Esophagus squamous epithelium (tissue), 5 donors: ENCODE measurements at regions of chr10 and their contacts with region 1.

Region 1: GRCh38 chr10:128069351-128070051 is 56.7 kb downstream of the MKI67 start:
- DNase-seq: no peak
- H3K4me3 ChIP-seq: no peak overlapping the region
- H3K27ac ChIP-seq: no peak overlapping the region
- H3K4me1 ChIP-seq: peaks cover 0 to 33% (median 15%) of the 10 kb centered on the region in 3 donors
- H3K27me3 ChIP-seq: no peaks in the 10 kb centered on the region
- CTCF ChIP-seq: peak; percentile 83 to 95 (median 86)
- POLR2A ChIP-seq: no peak

Region 2: DNA sequence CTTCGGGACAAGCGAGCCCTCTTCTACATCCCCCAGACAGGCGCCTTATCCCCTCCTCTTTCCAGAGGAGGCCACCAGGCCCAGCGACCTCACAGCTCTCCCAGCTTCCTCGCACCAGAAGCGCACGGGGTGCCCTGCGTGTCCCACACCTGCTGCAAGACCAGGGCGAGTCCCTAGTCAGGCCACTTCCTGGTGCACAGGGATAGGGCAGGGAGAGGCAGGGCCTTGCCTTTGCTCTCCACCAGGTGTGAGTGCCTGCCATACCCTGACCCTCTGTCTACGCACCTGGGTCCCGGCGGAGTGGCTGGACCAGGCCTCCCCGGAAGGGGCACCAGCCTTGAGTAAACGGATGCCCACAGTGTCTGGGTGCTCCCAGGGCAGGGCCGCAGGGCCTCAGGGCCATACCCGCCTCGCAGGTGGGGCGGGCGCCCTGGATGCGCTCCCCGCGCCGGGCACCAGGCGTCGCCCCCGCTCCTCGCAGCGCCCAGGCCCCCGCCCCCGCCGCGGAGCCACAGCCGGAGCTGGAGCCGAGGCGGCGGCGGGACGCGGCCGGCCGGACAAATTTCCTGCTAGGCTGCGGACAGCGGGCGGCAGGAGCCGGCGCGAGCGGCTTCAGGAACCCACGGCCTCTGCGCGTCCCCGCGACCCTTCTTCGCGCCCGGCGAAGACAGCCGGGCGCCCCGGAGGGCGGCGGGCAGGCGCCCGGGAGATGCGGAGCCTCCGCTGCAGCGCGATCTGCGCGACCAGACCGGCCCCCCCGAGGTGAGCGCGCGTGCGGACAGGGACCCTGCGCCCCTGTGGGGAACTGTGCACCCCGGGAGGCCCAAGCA is 162.7 kb before region 1 on chr10 and contains the start of gene PTPRE:
- intact Hi-C with region 1: loop called (anchors 5 kb)
- DNase-seq: no peak
- H3K4me3 ChIP-seq: peak within 1 kb of the TSS; percentile 36 to 74 (median 60)
- H3K27ac ChIP-seq: peak within 1 kb of the TSS; percentile 42 to 90 (median 76)
- H3K4me1 ChIP-seq: peaks cover 7 to 33% (median 14%) of the 10 kb centered on the region in 3 donors
- H3K27me3 ChIP-seq: peaks cover 0 to 44% (median 2%) of the 10 kb centered on the region in 4 donors
- CTCF ChIP-seq: peak; percentile 44 to 93 (median 85)
- POLR2A ChIP-seq: no peak
- total RNA-seq, gene PTPRE: 9.8 to 24.9 (median 22.7) TPM

Region 3: GRCh38 chr10:127919418-127920271 is 149.9 kb before region 1 on chr10:
- intact Hi-C with region 1: no loop called
- DNase-seq: no peak
- H3K4me3 ChIP-seq: no peak overlapping the region
- H3K27ac ChIP-seq: peak overlapping the region in 3 of 4 donors; percentile 9 to 65 (median 52)
- H3K4me1 ChIP-seq: peaks cover 0 to 35% (median 11%) of the 10 kb centered on the region in 3 donors
- H3K27me3 ChIP-seq: no peaks in the 10 kb centered on the region
- CTCF ChIP-seq: no peak
- POLR2A ChIP-seq: no peak

Region 4: DNA sequence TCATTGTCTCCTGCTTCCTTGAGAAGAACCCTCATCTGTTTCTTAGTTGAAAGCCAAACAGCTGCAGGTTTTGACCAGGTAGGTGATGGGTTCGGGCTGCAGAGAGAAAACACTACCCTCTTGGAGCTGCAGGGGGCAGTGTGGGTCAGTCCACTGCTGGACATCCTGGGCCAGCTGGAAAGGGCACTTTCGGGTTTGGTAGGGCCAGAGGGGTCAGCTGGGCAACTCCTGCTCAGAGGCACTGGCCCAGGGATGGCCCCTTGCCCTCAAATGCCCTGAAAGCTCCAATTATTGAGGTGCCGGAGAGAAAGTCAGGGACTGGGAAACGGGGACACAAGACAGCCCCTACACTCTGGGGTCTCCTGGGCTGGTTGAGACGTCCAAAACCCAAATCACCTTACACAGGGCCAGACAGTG is 33.9 kb before region 1 on chr10:
- intact Hi-C with region 1: loop called (anchors 5 kb)
- DNase-seq: no peak
- H3K4me3 ChIP-seq: no peak overlapping the region
- H3K27ac ChIP-seq: peak overlapping the region in 1 of 4 donors; percentile 14
- H3K4me1 ChIP-seq: peaks cover 0 to 10% (median 0%) of the 10 kb centered on the region in 3 donors
- H3K27me3 ChIP-seq: no peaks in the 10 kb centered on the region
- CTCF ChIP-seq: peak; percentile 73 to 88 (median 80)
- POLR2A ChIP-seq: no peak